ENCODE measurements at regions of chr2 and their contacts with region 1.

Region 1: DNA sequence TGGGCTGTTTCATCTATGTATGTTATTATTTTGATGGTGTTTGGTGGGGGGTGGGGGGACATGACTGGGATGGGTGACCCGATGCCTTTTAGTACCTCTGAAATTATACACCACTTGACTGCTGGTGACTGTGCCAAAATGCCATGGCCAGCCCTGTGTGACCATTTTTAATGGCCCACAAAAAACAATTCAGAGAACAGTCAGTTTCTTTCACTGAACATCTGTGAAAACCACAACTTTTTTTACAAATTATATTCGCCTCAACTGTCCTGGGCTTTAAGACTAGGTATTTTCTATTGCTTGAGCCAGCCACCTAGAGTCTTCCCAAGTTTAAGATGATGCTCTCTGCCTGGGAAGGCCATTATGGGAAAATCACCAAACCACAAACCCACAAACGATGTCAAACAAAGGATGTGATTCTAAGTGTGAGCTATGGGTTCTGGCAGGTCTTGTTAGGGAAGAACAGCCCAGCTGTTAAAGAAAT is 33.9 kb downstream of the FN1 start:
- DNase-seq: no peak

Region 2: GRCh38 chr2:215830304-215830703 is 428.4 kb after region 1 on chr2:
- intact Hi-C with region 1: loop called (anchors 5 kb)
- DNase-seq: no peak

Measured in head of caudate nucleus (tissue), 42 donors.